ENCODE measurements at regions of chr10 and their contacts with region 1.

Region 1: DNA sequence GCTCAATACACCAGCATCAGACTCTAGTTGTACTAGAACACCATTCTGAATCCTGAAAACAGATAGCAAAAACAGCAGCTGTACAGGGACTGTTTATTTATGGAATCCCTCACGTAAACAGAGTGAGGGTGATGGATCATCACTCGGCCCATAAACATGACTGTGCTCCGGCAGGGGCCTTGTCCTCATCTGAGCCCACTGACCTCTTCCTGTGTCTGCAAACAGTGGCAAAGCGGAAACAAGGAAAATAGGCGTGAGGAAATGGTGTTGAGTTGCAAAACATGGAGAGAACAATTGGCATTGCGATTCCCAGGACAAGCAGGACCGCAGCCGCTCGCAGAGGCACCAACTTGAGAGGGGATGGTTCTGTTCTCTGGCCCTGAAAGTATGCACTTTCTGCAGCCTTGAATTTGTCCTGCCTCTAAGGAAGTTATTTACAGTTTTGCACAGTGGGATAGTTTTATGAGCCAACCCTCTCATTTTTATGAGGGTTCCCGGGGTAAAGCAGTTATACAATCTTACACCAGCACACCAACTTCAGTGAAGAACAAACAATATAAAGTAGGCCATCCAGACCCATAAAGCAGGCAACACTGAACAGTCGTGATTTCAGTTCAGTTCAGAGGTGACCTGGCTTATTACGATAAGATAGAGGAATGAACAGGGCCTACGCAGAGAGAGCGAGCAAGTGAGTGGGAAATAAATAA is 248.0 kb upstream of the FZD8 start:
- DNase-seq: peak; percentile 74
- ATAC-seq: peak; percentile 90
- H3K4me3 ChIP-seq: no peak overlapping the region
- H3K27ac ChIP-seq: peak overlapping the region; percentile 38
- H3K4me1 ChIP-seq: peaks cover 25% of the 10 kb centered on the region
- H3K27me3 ChIP-seq: no peaks in the 10 kb centered on the region
- CTCF ChIP-seq: no peak

Region 2: DNA sequence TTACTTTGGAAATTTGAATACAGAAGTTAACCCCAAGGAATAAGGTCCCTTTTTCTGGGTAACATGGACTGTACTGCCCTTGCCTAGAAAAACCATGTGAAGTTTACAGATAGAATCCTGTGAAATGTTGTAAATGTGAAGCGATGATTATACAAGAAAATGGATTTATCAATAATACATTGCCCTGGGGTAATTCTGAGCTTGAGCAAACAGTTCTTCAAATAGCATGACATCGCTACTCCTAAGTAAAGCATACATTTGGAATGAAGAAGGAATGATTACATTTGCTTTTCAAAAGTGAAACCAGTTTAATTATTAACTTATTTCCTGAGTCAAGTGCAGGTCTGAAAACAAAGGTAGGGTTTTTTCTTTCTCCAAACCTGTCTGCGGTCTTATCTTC is 204.7 kb before region 1 on chr10:
- CTCF ChIA-PET with region 1: no interaction called
- POLR2A ChIA-PET with region 1: interaction called, 3 read pairs
- intact Hi-C with region 1: loop called (anchors 1 kb)
- DNase-seq: peak; percentile 91
- ATAC-seq: peak; percentile 85
- H3K4me3 ChIP-seq: peak overlapping the region; percentile 47
- H3K27ac ChIP-seq: peak overlapping the region; percentile 11
- H3K4me1 ChIP-seq: peaks cover 16% of the 10 kb centered on the region
- H3K27me3 ChIP-seq: no peaks in the 10 kb centered on the region
- CTCF ChIP-seq: no peak

Region 3: GRCh38 chr10:35795131-35795819 is 94.8 kb before region 1 on chr10:
- CTCF ChIA-PET with region 1: no interaction called
- POLR2A ChIA-PET with region 1: no interaction called
- intact Hi-C with region 1: loop called (anchors 1 kb)
- DNase-seq: peak; percentile 100
- ATAC-seq: peak; percentile 94
- H3K4me3 ChIP-seq: peak overlapping the region; percentile 12
- H3K27ac ChIP-seq: peak overlapping the region; percentile 80
- H3K4me1 ChIP-seq: peaks cover 46% of the 10 kb centered on the region
- H3K27me3 ChIP-seq: no peaks in the 10 kb centered on the region
- CTCF ChIP-seq: no peak

Region 4: GRCh38 chr10:35949811-35950211 is 59.7 kb after region 1 on chr10:
- CTCF ChIA-PET with region 1: no interaction called
- POLR2A ChIA-PET with region 1: no interaction called
- intact Hi-C with region 1: no loop called
- DNase-seq: no peak
- ATAC-seq: no peak
- H3K4me3 ChIP-seq: no peak overlapping the region
- H3K27ac ChIP-seq: no peak overlapping the region
- H3K4me1 ChIP-seq: no peaks in the 10 kb centered on the region
- H3K27me3 ChIP-seq: no peaks in the 10 kb centered on the region
- CTCF ChIP-seq: no peak

Region 5: GRCh38 chr10:35961501-35961900 is 71.4 kb after region 1 on chr10:
- CTCF ChIA-PET with region 1: no interaction called
- POLR2A ChIA-PET with region 1: no interaction called
- intact Hi-C with region 1: no loop called
- DNase-seq: peak; percentile 71
- ATAC-seq: peak; percentile 89
- H3K4me3 ChIP-seq: no peak overlapping the region
- H3K27ac ChIP-seq: no peak overlapping the region
- H3K4me1 ChIP-seq: no peaks in the 10 kb centered on the region
- H3K27me3 ChIP-seq: no peaks in the 10 kb centered on the region
- CTCF ChIP-seq: no peak

Region 6: GRCh38 chr10:36096571-36096970 is 206.4 kb after region 1 on chr10:
- CTCF ChIA-PET with region 1: no interaction called
- POLR2A ChIA-PET with region 1: no interaction called
- intact Hi-C with region 1: loop called (anchors 1 kb)
- DNase-seq: peak; percentile 97
- ATAC-seq: peak; percentile 71
- H3K4me3 ChIP-seq: no peak overlapping the region
- H3K27ac ChIP-seq: peak overlapping the region; percentile 58
- H3K4me1 ChIP-seq: peaks cover 29% of the 10 kb centered on the region
- H3K27me3 ChIP-seq: no peaks in the 10 kb centered on the region
- CTCF ChIP-seq: no peak

Region 7: DNA sequence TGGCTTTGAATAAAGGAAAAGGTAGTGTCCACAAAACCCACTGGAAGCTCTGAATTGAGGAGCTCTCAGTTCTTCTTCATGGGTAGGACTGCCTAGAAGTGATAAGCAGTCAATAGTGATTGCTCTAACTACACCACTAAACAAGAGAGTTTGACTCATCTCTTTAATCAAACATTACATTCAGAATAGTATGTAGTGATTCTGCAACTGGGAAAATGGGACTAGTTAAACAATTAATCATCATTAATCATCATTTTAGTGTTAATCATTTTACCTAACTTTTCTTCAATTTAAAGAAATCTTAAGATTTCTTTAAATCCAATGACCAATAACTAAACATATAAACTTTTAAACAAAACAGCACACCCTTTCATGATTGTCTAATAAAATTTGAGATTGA is 236.0 kb after region 1 on chr10:
- CTCF ChIA-PET with region 1: no interaction called
- POLR2A ChIA-PET with region 1: no interaction called
- intact Hi-C with region 1: loop called (anchors 1 kb)
- DNase-seq: peak; percentile 96
- ATAC-seq: peak; percentile 98
- H3K4me3 ChIP-seq: no peak overlapping the region
- H3K27ac ChIP-seq: peak overlapping the region; percentile 55
- H3K4me1 ChIP-seq: peaks cover 24% of the 10 kb centered on the region
- H3K27me3 ChIP-seq: no peaks in the 10 kb centered on the region
- CTCF ChIP-seq: no peak

Region 8: DNA sequence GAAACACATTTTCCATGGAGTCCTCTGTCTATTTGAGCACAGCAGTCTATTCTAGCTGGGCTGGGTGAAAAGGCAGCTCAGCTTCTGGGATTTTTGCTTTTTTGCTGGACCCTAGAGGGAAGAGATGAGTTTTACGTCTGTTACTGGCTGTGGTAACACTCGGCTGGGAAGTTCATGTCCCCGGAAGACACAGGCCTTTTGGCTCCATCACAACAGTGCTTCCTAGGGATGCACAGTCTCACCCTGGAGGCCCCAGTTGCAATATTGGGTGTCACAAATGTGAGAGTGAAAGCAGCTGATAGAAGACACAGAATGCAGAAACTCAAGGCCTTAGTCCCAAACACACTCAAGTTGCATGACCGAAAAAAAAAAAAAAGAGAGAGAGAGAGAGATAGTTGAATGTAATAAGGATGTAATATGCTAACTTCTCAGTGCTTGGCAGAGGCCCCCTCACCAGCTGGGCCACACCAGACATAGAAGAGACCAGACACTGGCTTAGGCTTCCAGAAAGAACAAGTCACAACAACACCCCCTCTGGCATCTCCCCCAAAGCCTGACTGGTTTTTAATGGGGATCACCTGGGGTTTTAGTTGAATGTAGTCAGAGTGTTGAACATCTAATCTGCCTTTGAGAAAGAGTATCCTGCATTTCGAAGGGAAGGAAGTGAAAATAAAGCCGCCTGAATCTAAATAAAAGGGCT is 297.4 kb after region 1 on chr10:
- CTCF ChIA-PET with region 1: interaction called, 11 read pairs
- POLR2A ChIA-PET with region 1: no interaction called
- intact Hi-C with region 1: no loop called
- DNase-seq: no peak
- ATAC-seq: no peak
- H3K4me3 ChIP-seq: no peak overlapping the region
- H3K27ac ChIP-seq: no peak overlapping the region
- H3K4me1 ChIP-seq: no peaks in the 10 kb centered on the region
- H3K27me3 ChIP-seq: no peaks in the 10 kb centered on the region
- CTCF ChIP-seq: no peak

Measured in PC-3 (cell line).